ENCODE measurements at regions of chr6 and their contacts with region 1.

Region 1: GRCh38 chr6:167093922-167094432 is 28.9 kb upstream of the CCR6 start:
- DNase-seq: peak; percentile 55
- H3K4me3 Mint-ChIP-seq: peak overlapping the region; percentile 31
- H3K27ac Mint-ChIP-seq: peak overlapping the region; percentile 66
- H3K4me1 Mint-ChIP-seq: peaks cover 63% of the 10 kb centered on the region
- H3K27me3 Mint-ChIP-seq: peaks cover 3% of the 10 kb centered on the region

Region 2: GRCh38 chr6:167113935-167114910 is 20.2 kb after region 1 on chr6:
- CTCF ChIA-PET with region 1: no interaction called
- POLR2A ChIA-PET with region 1: interaction called, 10 read pairs
- DNase-seq: peak; percentile 63
- H3K4me3 Mint-ChIP-seq: peak overlapping the region; percentile 66
- H3K27ac Mint-ChIP-seq: peak overlapping the region; percentile 64
- H3K4me1 Mint-ChIP-seq: peaks cover 79% of the 10 kb centered on the region
- H3K27me3 Mint-ChIP-seq: peaks cover 15% of the 10 kb centered on the region